ENCODE measurements at regions of chr2 and their contacts with region 1.

Region 1: DNA sequence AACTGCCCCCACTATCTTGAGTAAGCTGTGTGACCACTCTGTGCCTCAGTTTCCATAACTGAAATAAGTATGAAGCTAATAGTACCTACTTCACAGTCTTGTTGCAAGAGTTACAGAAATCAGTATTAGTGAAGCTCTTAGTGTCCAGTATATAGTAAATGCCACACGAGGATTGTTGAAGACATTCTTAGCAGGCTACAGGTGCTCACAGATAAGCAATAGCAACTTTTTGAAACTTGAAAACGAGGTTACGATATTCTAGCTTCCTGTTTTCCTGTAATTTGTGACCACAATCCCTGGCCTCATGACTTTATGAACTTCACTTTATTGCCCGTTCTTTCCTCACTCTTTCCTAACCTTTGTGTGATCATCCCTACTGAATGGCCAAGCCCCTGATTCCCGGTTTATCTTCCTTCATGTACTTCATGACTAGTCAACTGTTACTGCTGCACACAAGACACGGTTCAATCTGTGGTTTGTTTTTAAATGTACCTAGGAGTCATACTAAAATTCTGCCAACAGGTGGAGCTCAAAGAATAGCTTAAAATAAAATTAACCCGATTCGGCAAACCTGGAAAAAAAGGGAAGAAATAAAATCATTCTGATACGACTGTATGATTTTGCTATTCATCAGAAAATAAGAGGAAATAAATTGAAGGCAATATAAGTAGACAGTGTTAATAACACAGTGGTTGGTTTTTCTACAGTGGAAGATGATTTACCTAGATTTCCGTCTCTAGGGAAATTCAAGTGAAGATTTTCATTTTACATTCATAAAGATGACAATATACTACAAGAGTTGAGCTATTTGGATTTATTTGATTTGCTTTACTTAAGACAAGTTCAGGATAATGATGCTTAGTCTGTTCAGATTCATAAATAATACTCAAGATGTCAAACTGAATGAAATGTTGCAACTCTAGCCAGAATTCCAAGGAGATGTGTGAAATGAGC is 38.1 kb upstream of the STAT1 start:
- DNase-seq: no peak
- ATAC-seq: peak in 2 of 4 donors; percentile 34 to 38
- H3K4me3 ChIP-seq: no peak overlapping the region
- H3K27ac ChIP-seq: no peak overlapping the region
- H3K4me1 ChIP-seq: no peaks in the 10 kb centered on the region
- H3K27me3 ChIP-seq: peaks cover 0 to 1% (median 0%) of the 10 kb centered on the region in 3 donors
- CTCF ChIP-seq: peak; percentile 45

Region 2: DNA sequence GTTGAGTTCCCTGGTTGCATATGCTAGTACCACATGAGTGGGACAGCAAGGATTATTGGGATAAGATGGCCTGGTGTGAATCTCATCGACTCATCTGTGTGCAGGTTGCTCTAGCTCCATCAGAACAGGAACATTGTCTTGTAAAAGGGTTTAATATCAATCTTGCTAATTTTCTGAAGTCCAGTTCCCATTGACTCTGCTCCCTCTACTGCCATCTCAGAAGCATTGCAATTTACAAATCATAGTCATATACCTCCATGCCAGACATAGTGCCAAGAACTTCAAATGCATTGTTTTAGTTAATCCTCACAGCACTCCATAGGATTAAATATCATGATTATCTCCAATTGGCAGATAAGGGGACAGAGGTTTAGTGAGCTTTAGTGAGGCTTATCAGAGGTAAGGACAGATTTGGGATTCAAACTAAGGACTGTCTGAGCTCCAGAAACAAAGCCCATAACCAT is 103.5 kb after region 1 on chr2:
- intact Hi-C with region 1: loop called in 1 of 2 experiments (anchors 5 kb)
- DNase-seq: no peak
- ATAC-seq: no peak
- H3K4me3 ChIP-seq: no peak overlapping the region
- H3K27ac ChIP-seq: no peak overlapping the region
- H3K4me1 ChIP-seq: no peaks in the 10 kb centered on the region
- H3K27me3 ChIP-seq: no peaks in the 10 kb centered on the region
- CTCF ChIP-seq: no peak

Region 3: GRCh38 chr2:191521608-191522208 is 469.6 kb after region 1 on chr2:
- intact Hi-C with region 1: loop called in 1 of 2 experiments (anchors 10 kb)
- DNase-seq: no peak
- ATAC-seq: no peak
- H3K4me3 ChIP-seq: no peak overlapping the region
- H3K27ac ChIP-seq: no peak overlapping the region
- H3K4me1 ChIP-seq: no peaks in the 10 kb centered on the region
- H3K27me3 ChIP-seq: no peaks in the 10 kb centered on the region
- CTCF ChIP-seq: peak; percentile 84